Activated T-helper 1 cell treated with anti-CD3 and anti-CD28 coated beads, Interleukin-12 subunit alpha, Interleukin-12 subunit beta, Interleukin-2, Interleukin-4 antibody, amounts not matched to agents 30 ng/mL and 10 ng/mL and 1 ng/mL, durations not matched to agents 14 hours and 24 hours and 36 hours (primary cell): ENCODE measurements at regions of chr17 and their contacts with region 1.

Region 1: DNA sequence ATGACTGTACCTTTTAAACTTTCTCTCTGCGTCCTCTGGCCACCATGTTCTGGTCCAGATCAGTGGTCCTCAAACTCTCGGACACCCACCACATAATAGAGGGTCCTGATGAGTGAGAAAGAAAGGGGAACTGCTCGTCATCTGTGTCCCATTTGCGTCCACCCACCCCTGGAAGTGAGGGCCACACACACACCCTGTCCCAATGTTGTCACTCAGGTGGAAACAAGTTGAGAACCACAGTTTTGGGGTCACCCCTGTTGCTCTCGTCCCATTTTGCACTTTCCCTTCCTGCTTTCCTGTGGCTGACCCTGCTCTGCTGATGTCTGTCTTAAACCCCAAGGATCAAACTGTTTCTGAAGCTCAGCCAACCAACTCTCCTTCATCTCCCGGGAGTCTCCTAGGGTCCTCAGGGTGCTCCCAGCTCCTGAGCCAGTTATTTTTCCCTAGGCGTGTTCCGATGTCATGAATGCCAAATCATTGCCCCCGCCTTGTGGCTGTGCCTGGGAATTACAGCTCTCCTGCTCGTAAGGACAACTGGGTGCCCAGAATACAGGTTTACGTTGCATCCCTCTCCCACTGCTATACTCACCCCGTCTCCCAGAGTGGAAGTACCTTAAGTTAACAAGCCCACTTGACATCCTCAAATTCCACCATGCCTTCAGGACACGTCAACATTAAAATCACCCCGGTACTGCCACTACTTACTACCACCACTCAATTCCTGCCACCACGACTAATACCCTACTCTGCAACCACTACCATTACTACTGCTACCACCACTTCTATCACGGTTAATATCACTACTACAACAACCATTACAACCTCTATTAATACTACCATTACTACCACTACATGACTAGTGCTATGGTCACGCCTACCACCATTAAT is 26.0 kb upstream of the HNF1B start:
- DNase-seq: peak; percentile 14
- H3K4me3 Mint-ChIP-seq: no peak overlapping the region
- H3K27ac Mint-ChIP-seq: no peak overlapping the region
- H3K4me1 Mint-ChIP-seq: peaks cover 56% of the 10 kb centered on the region
- H3K27me3 Mint-ChIP-seq: peaks cover 20% of the 10 kb centered on the region

Region 2: DNA sequence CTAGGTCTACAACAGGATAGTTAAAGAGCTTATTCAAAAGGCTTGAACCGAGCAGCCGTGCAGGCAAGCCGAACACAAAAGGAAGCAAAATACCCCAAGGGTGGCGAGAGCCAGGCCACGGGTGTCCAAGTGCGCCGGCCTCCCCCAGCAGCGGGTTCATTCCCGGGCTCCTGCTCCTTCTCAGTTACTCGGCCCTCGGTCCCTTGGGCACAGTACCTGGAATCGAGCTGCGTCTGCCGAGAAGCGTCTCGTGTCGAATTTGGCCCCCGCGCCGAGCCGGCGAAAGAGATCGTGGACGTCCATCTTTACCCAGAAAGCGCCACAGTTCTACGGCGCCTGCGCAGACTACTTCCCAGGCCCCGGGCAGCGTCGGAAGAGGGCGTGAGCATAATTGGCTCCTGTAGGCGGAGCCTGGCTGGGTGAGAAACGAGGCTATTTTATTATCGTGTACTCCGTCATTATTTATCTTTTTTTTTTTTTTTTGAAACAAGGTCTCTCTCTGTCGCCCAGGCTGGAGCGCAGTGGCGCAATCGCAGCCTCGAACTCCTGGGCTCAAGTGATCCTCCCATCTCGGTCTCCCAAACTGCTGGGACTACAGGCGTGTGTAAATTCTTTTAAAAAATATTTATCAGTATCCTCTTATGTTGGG is 127.6 kb before region 1 on chr17 and contains the start of gene DDX52:
- intact Hi-C with region 1: loop called (anchors 5 kb)
- DNase-seq: peak; percentile 83
- H3K4me3 Mint-ChIP-seq: peak within 1 kb of the TSS; percentile 96
- H3K27ac Mint-ChIP-seq: peak within 1 kb of the TSS; percentile 81
- H3K4me1 Mint-ChIP-seq: peaks cover 33% of the 10 kb centered on the region
- H3K27me3 Mint-ChIP-seq: peaks cover 36% of the 10 kb centered on the region
- total RNA-seq, gene DDX52: 48.7 and 55.0 TPM in 2 replicates

Region 3: DNA sequence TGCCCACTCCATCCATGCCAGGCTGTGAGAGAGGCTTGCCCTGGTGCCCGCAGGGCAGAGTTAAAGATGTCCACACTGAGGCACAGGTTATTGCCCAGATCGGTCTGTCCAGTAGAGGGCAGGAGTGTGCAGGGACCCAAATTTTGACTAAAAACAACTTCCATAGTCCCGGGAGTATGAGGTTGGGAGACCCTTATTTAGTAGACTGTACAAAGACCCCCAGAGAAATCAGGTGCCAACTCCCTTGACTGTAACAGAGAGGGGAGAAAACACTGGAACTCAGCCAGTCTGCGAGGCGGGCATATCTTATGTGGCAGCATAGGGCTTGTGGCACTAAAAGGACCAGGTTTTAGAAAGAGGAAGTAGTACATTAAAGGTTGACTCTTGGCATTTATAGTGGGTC is 69.4 kb before region 1 on chr17:
- intact Hi-C with region 1: loop called (anchors 5 kb)
- DNase-seq: peak; percentile 35
- H3K4me3 Mint-ChIP-seq: peak overlapping the region; percentile 45
- H3K27ac Mint-ChIP-seq: no peak overlapping the region
- H3K4me1 Mint-ChIP-seq: peaks cover 59% of the 10 kb centered on the region
- H3K27me3 Mint-ChIP-seq: peaks cover 26% of the 10 kb centered on the region

Region 4: GRCh38 chr17:37791447-37792399 is 20.8 kb after region 1 on chr17:
- intact Hi-C with region 1: no loop called
- DNase-seq: peak; percentile 43
- H3K4me3 Mint-ChIP-seq: no peak overlapping the region
- H3K27ac Mint-ChIP-seq: no peak overlapping the region
- H3K4me1 Mint-ChIP-seq: no peaks in the 10 kb centered on the region
- H3K27me3 Mint-ChIP-seq: peaks cover 15% of the 10 kb centered on the region

Region 5: GRCh38 chr17:37824534-37825485 is 53.9 kb after region 1 on chr17:
- intact Hi-C with region 1: loop called (anchors 5 kb)
- DNase-seq: no peak
- H3K4me3 Mint-ChIP-seq: no peak overlapping the region
- H3K27ac Mint-ChIP-seq: no peak overlapping the region
- H3K4me1 Mint-ChIP-seq: peaks cover 30% of the 10 kb centered on the region
- H3K27me3 Mint-ChIP-seq: peaks cover 2% of the 10 kb centered on the region

Region 6: DNA sequence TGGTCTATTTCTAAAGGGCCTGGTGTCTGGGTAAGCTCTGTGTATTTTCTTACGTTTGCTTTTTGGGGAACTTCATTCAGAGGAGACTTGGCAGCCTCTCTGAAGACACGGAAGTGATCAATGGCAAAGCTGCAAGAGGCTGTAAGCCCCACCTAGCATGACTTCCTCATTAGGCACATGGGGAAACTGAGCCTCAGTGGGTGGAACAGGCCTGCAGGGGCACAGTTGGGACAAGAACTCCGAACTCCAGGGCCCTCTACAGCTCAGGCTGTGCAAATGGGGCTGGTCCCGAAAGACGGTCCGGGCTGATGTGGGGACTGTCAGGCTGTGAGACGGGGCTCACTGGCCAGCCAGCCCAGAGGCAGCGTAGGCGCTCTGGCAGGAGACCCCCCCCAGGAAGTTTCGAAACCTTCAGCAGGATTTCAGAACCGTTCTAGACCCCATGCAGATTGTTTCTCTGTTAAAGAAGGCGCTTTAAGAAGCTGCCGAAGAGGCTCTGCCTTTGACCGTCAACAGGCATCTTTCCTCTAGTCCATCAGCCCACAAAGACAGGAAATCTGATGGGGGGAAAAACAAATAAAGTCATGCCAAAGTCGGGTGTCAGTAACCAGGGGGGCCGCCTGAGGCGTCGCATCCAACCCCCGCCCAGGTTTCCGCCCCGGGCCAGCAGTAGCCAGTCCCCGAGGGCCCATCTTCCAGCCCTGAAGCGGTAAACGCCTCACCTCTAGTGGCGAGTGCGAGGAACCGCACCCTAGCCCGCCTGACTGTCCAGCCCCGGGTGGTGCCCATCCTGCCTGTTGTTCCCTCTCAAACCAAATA is 73.5 kb after region 1 on chr17:
- intact Hi-C with region 1: loop called (anchors 2 kb)
- DNase-seq: peak; percentile 51
- H3K4me3 Mint-ChIP-seq: no peak overlapping the region
- H3K27ac Mint-ChIP-seq: no peak overlapping the region
- H3K4me1 Mint-ChIP-seq: peaks cover 49% of the 10 kb centered on the region
- H3K27me3 Mint-ChIP-seq: peaks cover 9% of the 10 kb centered on the region